CD4-positive, alpha-beta memory T cell (primary cell): ENCODE measurements at regions of chr5 and their contacts with region 1.

Region 1: DNA sequence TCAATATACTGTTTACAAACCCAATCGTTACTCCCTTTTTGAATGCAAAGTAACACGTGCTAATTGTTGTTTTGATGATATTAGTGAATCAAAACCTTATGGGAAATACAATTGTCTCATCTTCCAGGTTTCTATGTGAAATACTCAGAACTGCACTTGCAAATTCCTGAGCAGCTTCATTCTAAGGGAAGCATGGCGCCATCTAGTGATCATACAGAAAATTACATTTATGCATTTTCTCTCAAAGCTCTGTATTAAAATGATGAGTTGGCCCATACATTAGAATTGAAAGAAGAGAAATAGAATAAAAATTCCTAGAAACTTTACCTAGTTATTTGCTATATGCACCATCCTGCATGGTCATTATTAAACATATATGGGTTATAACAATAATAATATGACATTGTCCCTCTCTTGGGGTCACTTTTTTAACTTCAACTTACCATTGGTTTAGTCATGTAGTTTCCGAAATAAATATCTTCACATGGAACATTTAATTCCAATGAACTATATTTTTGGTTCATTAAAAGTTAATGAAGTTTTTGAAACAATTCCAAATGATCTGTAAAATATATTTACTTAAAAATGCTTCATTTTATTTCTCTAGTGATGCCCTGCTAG is 220.0 kb downstream of the PDE4D start:
- DNase-seq: peak in 4 of 5 donors; percentile 10 to 34 (median 21)
- H3K4me3 ChIP-seq: no peak overlapping the region
- H3K4me3 Mint-ChIP-seq: no peak overlapping the region
- H3K27ac ChIP-seq: no peak overlapping the region
- H3K27ac Mint-ChIP-seq: no peak overlapping the region
- H3K4me1 ChIP-seq: no peaks in the 10 kb centered on the region
- H3K4me1 Mint-ChIP-seq: peaks cover 0 to 2% (median under 1%) of the 10 kb centered on the region in 4 donors
- H3K27me3 ChIP-seq: no peaks in the 10 kb centered on the region
- H3K27me3 Mint-ChIP-seq: peaks cover 0 to 3% of the 10 kb centered on the region in 2 donors

Region 2: DNA sequence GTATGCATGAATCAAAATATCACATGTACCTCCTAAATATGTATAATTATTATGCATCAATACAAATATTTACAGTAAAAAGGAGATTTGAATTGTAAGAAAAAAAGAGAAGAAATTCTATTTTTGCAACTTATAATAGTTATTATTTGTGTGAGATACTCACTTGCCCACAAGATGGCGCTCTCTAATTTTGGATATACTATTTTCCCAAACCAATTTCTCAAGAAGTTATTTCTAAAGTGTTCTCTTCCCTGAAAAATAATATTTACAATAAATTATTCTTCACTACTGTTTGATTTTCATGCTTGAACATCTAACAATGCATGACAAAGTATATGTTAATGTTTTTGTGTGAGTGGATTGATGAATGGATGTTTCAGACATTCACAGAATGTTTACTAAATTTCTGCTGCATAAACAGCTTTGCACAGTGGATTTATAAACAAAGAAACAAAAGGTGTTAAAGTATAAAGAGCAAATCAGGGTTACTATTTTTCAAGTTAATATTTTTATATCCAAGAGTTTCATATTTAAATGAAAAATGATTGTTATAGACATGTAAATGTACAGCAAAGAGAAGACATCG is 283.4 kb before region 1 on chr5:
- CTCF ChIA-PET with region 1: no interaction called
- POLR2A ChIA-PET with region 1: no interaction called
- intact Hi-C with region 1: loop called (anchors 1 kb)
- DNase-seq: peak in 2 of 5 donors; percentile 11 to 25
- H3K4me3 ChIP-seq: no peak overlapping the region
- H3K4me3 Mint-ChIP-seq: no peak overlapping the region
- H3K27ac ChIP-seq: no peak overlapping the region
- H3K27ac Mint-ChIP-seq: no peak overlapping the region
- H3K4me1 ChIP-seq: no peaks in the 10 kb centered on the region
- H3K4me1 Mint-ChIP-seq: no peaks in the 10 kb centered on the region
- H3K27me3 ChIP-seq: no peaks in the 10 kb centered on the region
- H3K27me3 Mint-ChIP-seq: peaks cover 2 to 16% of the 10 kb centered on the region in 2 donors

Region 3: GRCh38 chr5:59660737-59661136 is 12.8 kb before region 1 on chr5:
- CTCF ChIA-PET with region 1: interaction called, 26 read pairs
- POLR2A ChIA-PET with region 1: no interaction called
- intact Hi-C with region 1: no loop called
- DNase-seq: no peak
- H3K4me3 ChIP-seq: no peak overlapping the region
- H3K4me3 Mint-ChIP-seq: no peak overlapping the region
- H3K27ac ChIP-seq: no peak overlapping the region
- H3K27ac Mint-ChIP-seq: no peak overlapping the region
- H3K4me1 ChIP-seq: no peaks in the 10 kb centered on the region
- H3K4me1 Mint-ChIP-seq: peaks cover 0 to 7% (median 3%) of the 10 kb centered on the region in 4 donors
- H3K27me3 ChIP-seq: no peaks in the 10 kb centered on the region
- H3K27me3 Mint-ChIP-seq: peaks cover 0 to 4% of the 10 kb centered on the region in 2 donors

Region 4: GRCh38 chr5:59684388-59685190 is 11.0 kb after region 1 on chr5:
- CTCF ChIA-PET with region 1: interaction called, 10 read pairs
- POLR2A ChIA-PET with region 1: no interaction called
- intact Hi-C with region 1: no loop called
- DNase-seq: no peak
- H3K4me3 ChIP-seq: no peak overlapping the region
- H3K4me3 Mint-ChIP-seq: no peak overlapping the region
- H3K27ac ChIP-seq: no peak overlapping the region
- H3K27ac Mint-ChIP-seq: no peak overlapping the region
- H3K4me1 ChIP-seq: no peaks in the 10 kb centered on the region
- H3K4me1 Mint-ChIP-seq: no peaks in the 10 kb centered on the region
- H3K27me3 ChIP-seq: no peaks in the 10 kb centered on the region
- H3K27me3 Mint-ChIP-seq: peaks cover 6 to 12% of the 10 kb centered on the region in 2 donors